Left colon (tissue), 2 donors: ENCODE measurements at regions of chr9 and their contacts with region 1.

Region 1: DNA sequence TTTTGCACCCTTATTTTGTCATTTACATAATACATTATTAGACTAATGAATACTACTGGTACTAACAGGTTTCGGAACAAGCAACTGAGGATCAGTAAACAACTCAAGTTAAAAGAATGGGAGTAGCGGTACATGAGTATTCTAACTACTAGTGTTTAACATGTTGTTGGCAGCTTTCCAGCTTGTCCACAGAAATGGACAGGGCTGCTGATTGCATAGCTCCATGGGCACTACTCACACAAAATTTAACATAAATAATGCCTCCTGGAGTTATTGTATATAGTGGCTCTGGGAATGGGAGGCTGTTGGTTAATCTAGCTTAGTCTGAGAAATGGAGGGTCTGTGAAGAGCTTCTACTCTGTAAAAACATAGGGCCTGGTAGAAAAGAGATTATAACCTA is 6.7 kb downstream of the NCBP1 start:
- DNase-seq: no peak
- ATAC-seq: no peak

Region 2: GRCh38 chr9:97682242-97682641 is 41.9 kb after region 1 on chr9:
- intact Hi-C with region 1: loop called in 1 of 2 experiments (anchors 5 kb)
- DNase-seq: no peak
- ATAC-seq: peak; percentile 48

Region 3: GRCh38 chr9:97710356-97711222 is 70.3 kb after region 1 on chr9:
- intact Hi-C with region 1: no loop called
- DNase-seq: peak in 1 of 2 donors; percentile 48
- ATAC-seq: peak; percentile 86